ENCODE measurements at regions of chr4 and their contacts with region 1.

Region 1: GRCh38 chr4:75895744-75896314 is 6.4 kb downstream of the PPEF2 start:
- DNase-seq: peak; percentile 23
- ATAC-seq: peak; percentile 82
- H3K4me3 ChIP-seq: no peak overlapping the region
- H3K27ac ChIP-seq: no peak overlapping the region
- H3K4me1 ChIP-seq: no peaks in the 10 kb centered on the region
- H3K27me3 ChIP-seq: no peaks in the 10 kb centered on the region
- CTCF ChIP-seq: peak; percentile 44 to 78 (median 55); a peak in 5 of 6 replicates
- POLR2A ChIP-seq: no peak
- RAD21 ChIP-seq: peak; percentile 60

Region 2: GRCh38 chr4:75908555-75908954 is 12.7 kb after region 1 on chr4:
- CTCF ChIA-PET with region 1: interaction called, 14 read pairs
- POLR2A ChIA-PET with region 1: no interaction called
- RAD21 ChIA-PET with region 1: no interaction called
- intact Hi-C with region 1: no loop called
- DNase-seq: no peak
- ATAC-seq: no peak
- H3K4me3 ChIP-seq: no peak overlapping the region
- H3K27ac ChIP-seq: no peak overlapping the region
- H3K4me1 ChIP-seq: no peaks in the 10 kb centered on the region
- H3K27me3 ChIP-seq: no peaks in the 10 kb centered on the region
- CTCF ChIP-seq: no peak
- POLR2A ChIP-seq: no peak
- RAD21 ChIP-seq: no peak

Region 3: GRCh38 chr4:75916091-75916661 is 20.3 kb after region 1 on chr4:
- CTCF ChIA-PET with region 1: interaction called, 12 read pairs
- POLR2A ChIA-PET with region 1: no interaction called
- RAD21 ChIA-PET with region 1: no interaction called
- intact Hi-C with region 1: no loop called
- DNase-seq: peak; percentile 13
- ATAC-seq: peak; percentile 88
- H3K4me3 ChIP-seq: no peak overlapping the region
- H3K27ac ChIP-seq: no peak overlapping the region
- H3K4me1 ChIP-seq: no peaks in the 10 kb centered on the region; a peak in 1 of 4 replicates
- H3K27me3 ChIP-seq: no peaks in the 10 kb centered on the region
- CTCF ChIP-seq: peak; percentile 62 to 88 (median 76)
- POLR2A ChIP-seq: no peak
- RAD21 ChIP-seq: peak; percentile 72

Region 4: DNA sequence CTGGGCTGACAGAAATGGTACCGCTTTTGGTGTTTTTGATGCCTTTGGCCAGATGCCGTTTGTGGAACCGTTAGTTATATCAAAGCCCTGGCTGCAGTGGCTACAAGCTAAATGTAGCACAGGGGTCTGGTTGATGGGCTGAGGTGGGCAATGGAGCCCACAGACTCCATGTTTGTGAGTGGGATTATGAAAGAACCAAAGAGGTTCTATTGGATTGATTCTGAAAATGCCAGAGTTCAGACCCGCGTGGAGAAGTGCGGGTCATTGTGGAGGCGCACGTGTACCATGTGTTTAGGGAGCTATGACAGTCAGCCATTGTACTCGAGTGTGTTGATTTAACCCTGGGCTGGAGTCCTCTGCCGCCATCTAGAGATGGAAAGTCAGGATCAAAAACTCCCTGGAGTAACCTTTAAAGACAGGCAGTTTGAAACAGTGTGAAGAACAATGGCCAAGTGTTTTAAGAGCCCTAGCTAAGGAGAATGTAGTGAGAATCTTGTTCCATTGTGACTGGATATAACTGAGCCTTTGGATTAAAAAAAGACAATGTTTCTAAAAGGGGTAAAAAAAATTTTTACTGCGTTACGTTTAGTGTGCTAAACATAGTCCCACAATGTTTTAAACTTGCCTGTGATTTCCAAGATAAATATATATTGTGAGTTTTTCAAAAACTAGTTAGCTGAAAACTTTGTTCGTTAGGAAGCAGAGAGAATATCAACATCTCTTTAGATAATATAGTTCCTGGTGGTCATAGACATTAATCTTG is 191.4 kb after region 1 on chr4:
- CTCF ChIA-PET with region 1: interaction called, 13 read pairs
- POLR2A ChIA-PET with region 1: no interaction called
- RAD21 ChIA-PET with region 1: no interaction called
- intact Hi-C with region 1: no loop called
- DNase-seq: peak; percentile 62
- ATAC-seq: peak; percentile 99
- H3K4me3 ChIP-seq: no peak overlapping the region
- H3K27ac ChIP-seq: no peak overlapping the region
- H3K4me1 ChIP-seq: peaks cover 3 to 11% of the 10 kb centered on the region in 2 experiments; a peak in 3 of 4 replicates
- H3K27me3 ChIP-seq: no peaks in the 10 kb centered on the region
- CTCF ChIP-seq: peak; percentile 60 to 71 (median 67); a peak in 5 of 6 replicates
- POLR2A ChIP-seq: no peak
- RAD21 ChIP-seq: peak; percentile 80

Measured in HCT116 (cell line).